ENCODE measurements at regions of chr16 and their contacts with region 1.

Region 1: GRCh38 chr16:75379911-75380847 is 53.1 kb downstream of the CFDP1 start:
- DNase-seq: peak in 13 of 14 experiments; percentile 16 to 82 (median 36)
- ATAC-seq: peak; percentile 91
- H3K4me3 ChIP-seq: peak overlapping the region; percentile 20
- H3K4me3 Mint-ChIP-seq: peak overlapping the region; percentile 78
- H3K27ac ChIP-seq: peak overlapping the region in 1 of 2 donors; percentile 43
- H3K27ac Mint-ChIP-seq: peak overlapping the region; percentile 57
- H3K4me1 ChIP-seq: peaks cover 23% of the 10 kb centered on the region
- H3K4me1 Mint-ChIP-seq: peaks cover 61% of the 10 kb centered on the region
- H3K27me3 ChIP-seq: no peaks in the 10 kb centered on the region
- H3K27me3 Mint-ChIP-seq: no peaks in the 10 kb centered on the region
- CTCF ChIP-seq: no peak

Region 2: GRCh38 chr16:75326333-75326732 is 53.8 kb before region 1 on chr16:
- CTCF ChIA-PET with region 1: no interaction called
- POLR2A ChIA-PET with region 1: interaction called, 11 read pairs
- intact Hi-C with region 1: loop called in 1 of 2 experiments (anchors 10 kb)
- DNase-seq: peak in 5 of 14 experiments; percentile 4 to 31 (median 13)
- ATAC-seq: peak; percentile 64
- H3K4me3 ChIP-seq: no peak overlapping the region
- H3K4me3 Mint-ChIP-seq: no peak overlapping the region
- H3K27ac ChIP-seq: no peak overlapping the region
- H3K27ac Mint-ChIP-seq: peak overlapping the region; percentile 69
- H3K4me1 ChIP-seq: peaks cover 7% of the 10 kb centered on the region
- H3K4me1 Mint-ChIP-seq: peaks cover 39% of the 10 kb centered on the region
- H3K27me3 ChIP-seq: no peaks in the 10 kb centered on the region
- H3K27me3 Mint-ChIP-seq: no peaks in the 10 kb centered on the region
- CTCF ChIP-seq: no peak

Region 3: GRCh38 chr16:75337430-75337829 is 42.7 kb before region 1 on chr16:
- CTCF ChIA-PET with region 1: no interaction called
- POLR2A ChIA-PET with region 1: no interaction called
- intact Hi-C with region 1: no loop called
- DNase-seq: no peak
- ATAC-seq: no peak
- H3K4me3 ChIP-seq: no peak overlapping the region
- H3K4me3 Mint-ChIP-seq: no peak overlapping the region
- H3K27ac ChIP-seq: no peak overlapping the region
- H3K27ac Mint-ChIP-seq: no peak overlapping the region
- H3K4me1 ChIP-seq: peaks cover 12% of the 10 kb centered on the region
- H3K4me1 Mint-ChIP-seq: peaks cover 20% of the 10 kb centered on the region
- H3K27me3 ChIP-seq: no peaks in the 10 kb centered on the region
- H3K27me3 Mint-ChIP-seq: no peaks in the 10 kb centered on the region
- CTCF ChIP-seq: no peak